Endothelial cell of umbilical vein (primary cell): ENCODE measurements at regions of chr3 and their contacts with region 1.

Region 1: DNA sequence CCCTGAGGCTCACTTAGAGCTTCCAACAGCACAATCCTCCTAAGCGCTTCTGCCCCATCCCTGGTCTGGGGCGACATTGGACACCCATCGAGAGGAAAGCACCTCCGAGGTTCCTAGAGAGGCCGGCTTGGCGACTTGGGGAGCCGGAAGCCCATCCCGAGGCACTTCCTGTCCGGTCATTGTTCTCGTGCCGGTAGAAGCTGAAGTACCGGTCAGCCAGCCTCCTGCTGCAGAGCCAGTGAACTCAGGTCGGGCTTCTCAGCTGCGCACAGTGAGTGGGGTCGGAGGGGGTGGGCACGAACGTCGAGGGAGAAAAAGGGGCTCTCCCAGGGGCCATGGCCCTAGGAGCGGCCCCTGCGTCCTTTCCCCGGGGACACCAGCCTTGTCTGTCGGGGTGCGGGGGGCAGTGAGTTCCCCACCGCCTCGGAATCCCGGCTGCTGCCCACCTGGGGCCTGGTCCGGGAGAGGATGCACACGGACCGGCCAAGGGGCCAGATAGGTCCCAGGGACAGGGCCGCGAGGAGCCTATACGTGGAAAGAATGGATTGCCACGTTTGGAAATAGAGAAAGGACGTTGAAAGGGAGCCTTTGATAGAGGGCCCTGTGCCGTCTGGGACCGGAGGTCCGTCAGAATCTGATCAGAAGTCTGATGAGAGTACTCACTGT is at the start of gene ZNF35:
- DNase-seq: peak; percentile 84
- H3K4me3 ChIP-seq: peak within 1 kb of the TSS; percentile 83 to 97 (median 96)
- H3K27ac ChIP-seq: peak within 1 kb of the TSS; percentile 66
- H3K4me1 ChIP-seq: peaks cover 8% of the 10 kb centered on the region
- H3K27me3 ChIP-seq: no peaks in the 10 kb centered on the region
- CTCF ChIP-seq: no peak
- POLR2A ChIP-seq: peak; percentile 88
- total RNA-seq, gene ZNF35: 9.1 and 11.3 TPM in 2 replicates

Region 2: DNA sequence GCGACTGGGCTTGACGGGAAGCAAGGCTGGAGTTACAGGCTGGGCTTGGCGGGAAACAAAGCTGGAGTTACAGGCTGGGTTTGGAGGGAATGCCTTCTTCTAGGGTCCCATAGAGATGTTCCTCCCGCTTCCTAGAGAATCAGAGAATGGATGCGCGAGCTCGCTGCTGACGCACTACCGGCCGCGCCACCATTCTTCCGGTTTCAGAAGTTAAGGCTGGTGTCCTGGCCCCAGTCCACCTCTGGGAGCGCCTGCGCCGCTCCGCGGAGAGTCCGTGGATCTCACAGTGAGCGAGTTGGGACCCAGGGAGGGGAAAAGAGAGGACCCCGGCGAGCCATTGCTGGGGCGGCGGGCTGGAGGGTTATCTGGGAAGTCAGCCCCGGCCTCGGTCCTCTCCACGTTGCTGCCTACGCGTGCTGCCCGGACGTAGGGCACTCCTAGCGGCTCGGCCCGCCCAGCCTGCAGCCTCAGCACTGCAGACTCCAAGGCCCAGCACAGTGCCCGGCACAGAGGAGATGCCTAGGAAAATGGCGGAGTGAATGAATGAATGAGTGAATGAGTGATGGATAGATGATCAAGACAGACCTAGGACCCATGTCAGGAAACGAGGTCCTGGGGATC is 63.9 kb after region 1 on chr3 and contains the start of gene ZNF502:
- CTCF ChIA-PET with region 1: no interaction called
- POLR2A ChIA-PET with region 1: interaction called, 3 read pairs
- dilution Hi-C with region 1: no loop called
- intact Hi-C with region 1: loop called (anchors 1 kb)
- DNase-seq: peak; percentile 85
- H3K4me3 ChIP-seq: peak within 1 kb of the TSS; percentile 76 to 98 (median 86)
- H3K27ac ChIP-seq: peak within 1 kb of the TSS; percentile 58
- H3K4me1 ChIP-seq: no peaks in the 10 kb centered on the region
- H3K27me3 ChIP-seq: no peaks in the 10 kb centered on the region
- CTCF ChIP-seq: peak; percentile 35 to 43
- POLR2A ChIP-seq: no peak
- total RNA-seq, gene ZNF502: 4.1 and 4.2 TPM in 2 replicates

Region 3: GRCh38 chr3:44729384-44729910 is 80.8 kb after region 1 on chr3 and contains the start of gene ZNF501:
- CTCF ChIA-PET with region 1: no interaction called
- POLR2A ChIA-PET with region 1: no interaction called
- dilution Hi-C with region 1: no loop called
- intact Hi-C with region 1: loop called (anchors 5 kb)
- DNase-seq: peak; percentile 83
- H3K4me3 ChIP-seq: peak within 1 kb of the TSS; percentile 67 to 82 (median 72)
- H3K27ac ChIP-seq: peak within 1 kb of the TSS; percentile 27
- H3K4me1 ChIP-seq: no peaks in the 10 kb centered on the region
- H3K27me3 ChIP-seq: no peaks in the 10 kb centered on the region
- CTCF ChIP-seq: no peak
- POLR2A ChIP-seq: peak; percentile 36
- total RNA-seq, gene ZNF501: 2.9 and 3.9 TPM in 2 replicates

Region 4: DNA sequence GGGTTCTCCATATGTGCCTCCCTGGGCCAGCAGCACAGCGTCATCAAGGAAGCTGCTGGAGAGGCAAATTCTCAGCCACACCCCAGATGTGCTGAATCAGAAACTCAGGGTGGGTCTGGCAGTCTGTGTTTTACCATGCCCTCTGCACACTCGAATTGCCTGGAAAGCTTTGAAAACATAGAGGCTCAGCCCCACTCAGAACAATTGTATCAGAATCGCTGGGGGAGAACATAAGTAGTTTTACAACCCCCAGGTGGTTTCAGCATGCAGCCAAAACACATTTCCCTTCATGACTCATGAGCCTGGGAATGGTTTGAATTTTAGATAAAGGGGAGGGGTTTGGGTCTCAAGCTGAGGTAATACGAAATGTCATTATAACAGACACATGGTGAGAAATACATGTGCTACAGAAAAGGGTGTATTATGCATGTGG is 235.3 kb after region 1 on chr3:
- CTCF ChIA-PET with region 1: no interaction called
- POLR2A ChIA-PET with region 1: no interaction called
- dilution Hi-C with region 1: no loop called
- intact Hi-C with region 1: loop called (anchors 10 kb)
- DNase-seq: peak; percentile 90
- H3K4me3 ChIP-seq: no peak overlapping the region
- H3K27ac ChIP-seq: peak overlapping the region; percentile 91
- H3K4me1 ChIP-seq: peaks cover 38% of the 10 kb centered on the region
- H3K27me3 ChIP-seq: no peaks in the 10 kb centered on the region
- CTCF ChIP-seq: no peak
- POLR2A ChIP-seq: no peak

Region 5: DNA sequence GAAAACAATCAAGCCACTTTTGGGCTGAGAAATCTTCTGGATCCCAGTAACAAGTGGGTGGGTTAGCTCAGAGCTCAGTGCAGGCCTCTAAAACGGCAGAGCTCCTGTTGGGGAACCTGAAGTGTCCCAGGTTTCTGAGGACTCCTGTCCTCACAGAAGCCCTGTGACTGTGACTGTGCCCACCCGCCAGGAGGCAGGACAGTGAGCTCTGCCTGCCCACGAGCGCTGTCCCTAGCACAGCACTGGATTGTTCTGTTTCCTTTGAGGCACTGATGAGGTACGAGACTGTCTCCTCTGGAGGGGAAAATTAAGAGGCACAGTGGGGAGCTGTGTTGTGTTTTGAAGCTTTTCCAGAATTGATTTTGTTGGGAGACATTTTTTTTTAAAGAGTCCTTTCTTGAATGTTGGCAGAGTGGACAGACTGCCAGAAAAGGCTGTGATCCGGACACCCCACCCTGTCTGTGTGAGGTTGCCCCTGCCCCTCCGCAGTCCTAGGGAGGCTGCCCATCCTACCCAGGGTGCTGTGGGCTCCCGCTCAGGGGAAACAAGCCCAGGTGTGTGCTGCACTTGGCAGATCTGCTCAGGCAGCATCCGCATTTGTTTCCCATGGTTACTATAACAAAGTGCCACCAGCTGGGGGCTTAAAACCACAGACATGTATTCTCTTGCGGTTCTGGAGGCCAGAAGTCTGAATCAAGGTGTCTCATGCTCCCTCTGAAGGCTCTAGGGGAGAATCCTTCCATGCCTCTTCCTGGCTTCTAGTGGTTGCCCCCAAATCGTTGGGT is 673.1 kb after region 1 on chr3:
- CTCF ChIA-PET with region 1: no interaction called
- POLR2A ChIA-PET with region 1: no interaction called
- dilution Hi-C with region 1: no loop called
- intact Hi-C with region 1: no loop called
- DNase-seq: no peak
- H3K4me3 ChIP-seq: no peak overlapping the region
- H3K27ac ChIP-seq: no peak overlapping the region
- H3K4me1 ChIP-seq: no peaks in the 10 kb centered on the region
- H3K27me3 ChIP-seq: peaks cover 1 to 6% of the 10 kb centered on the region in 2 experiments
- CTCF ChIP-seq: no peak
- POLR2A ChIP-seq: no peak